Aorta (tissue), 5 donors: ENCODE measurements at regions of chr5 and their contacts with region 1.

Region 1: GRCh38 chr5:154356020-154356655 is 89.7 kb upstream of the SAP30L start:
- DNase-seq: no peak
- ATAC-seq: no peak
- H3K4me3 ChIP-seq: no peak overlapping the region
- H3K27ac ChIP-seq: no peak overlapping the region
- H3K4me1 ChIP-seq: peaks cover 2 to 11% of the 10 kb centered on the region in 2 donors
- H3K27me3 ChIP-seq: no peaks in the 10 kb centered on the region

Region 2: DNA sequence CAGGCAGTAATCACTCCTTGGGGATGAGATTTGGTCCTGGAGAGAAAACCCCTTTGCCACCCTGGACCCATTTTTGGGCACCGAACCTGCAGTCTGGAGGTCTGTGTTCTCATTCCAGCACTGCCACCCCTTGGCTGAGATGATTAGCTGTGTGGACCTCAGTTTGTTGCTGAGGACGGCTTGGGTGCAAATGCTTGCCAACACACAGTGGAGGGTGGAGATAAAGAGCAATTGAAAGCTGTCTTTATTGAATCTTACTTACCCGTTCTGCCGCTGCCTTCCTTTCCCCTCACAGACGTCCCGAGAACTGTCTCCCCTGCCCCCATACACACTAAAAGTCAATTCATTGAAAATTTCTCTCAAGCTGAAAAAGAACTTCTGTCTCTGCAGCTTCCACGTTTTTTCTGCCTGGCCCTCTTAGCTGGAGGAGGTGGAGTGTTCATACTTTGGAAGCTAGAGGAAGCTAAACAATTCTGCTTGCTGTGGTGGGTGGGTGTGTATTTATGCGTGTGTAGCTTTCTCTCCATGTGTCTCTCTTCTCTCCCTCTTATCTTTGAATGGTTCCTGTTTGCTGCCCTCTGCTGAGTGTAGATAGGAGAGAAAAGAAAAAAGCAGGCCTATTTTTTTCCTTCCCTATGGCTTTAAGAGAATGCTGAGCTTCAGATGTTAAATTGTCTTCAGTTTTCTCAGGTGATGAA is 159.0 kb before region 1 on chr5:
- intact Hi-C with region 1: loop called in 1 of 2 experiments (anchors 5 kb)
- DNase-seq: no peak
- ATAC-seq: peak; percentile 37
- H3K4me3 ChIP-seq: no peak overlapping the region
- H3K27ac ChIP-seq: no peak overlapping the region
- H3K4me1 ChIP-seq: peaks cover 0 to 3% of the 10 kb centered on the region in 2 donors
- H3K27me3 ChIP-seq: no peaks in the 10 kb centered on the region

Region 3: GRCh38 chr5:154287136-154287535 is 69.0 kb before region 1 on chr5:
- intact Hi-C with region 1: loop called in 1 of 2 experiments (anchors 5 kb)
- DNase-seq: peak in 1 of 2 donors; percentile 49
- ATAC-seq: peak; percentile 75
- H3K4me3 ChIP-seq: no peak overlapping the region
- H3K27ac ChIP-seq: peak overlapping the region in 1 of 2 donors; percentile 62
- H3K4me1 ChIP-seq: peaks cover 0 to 4% of the 10 kb centered on the region in 2 donors
- H3K27me3 ChIP-seq: no peaks in the 10 kb centered on the region

Region 4: DNA sequence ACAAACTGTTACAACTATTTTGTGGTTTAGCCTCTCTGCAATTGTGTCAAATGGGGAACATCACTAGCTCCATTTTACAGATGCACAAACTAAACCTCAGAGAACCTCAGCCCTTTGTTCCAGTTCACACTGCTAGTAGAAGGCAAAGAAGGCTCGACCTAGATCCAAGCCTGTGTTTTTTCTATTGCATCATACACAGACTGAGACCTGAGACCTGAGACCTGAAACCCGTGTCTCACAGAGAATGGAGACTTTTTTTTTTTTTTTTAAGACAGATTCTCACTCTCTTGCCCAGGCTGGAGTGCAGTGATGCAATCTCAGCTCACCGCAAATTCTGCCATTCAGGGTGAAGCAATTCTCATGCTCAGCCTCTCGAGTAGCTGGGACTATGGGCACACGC is 44.8 kb before region 1 on chr5:
- intact Hi-C with region 1: loop called in 1 of 2 experiments (anchors 5 kb)
- DNase-seq: no peak
- ATAC-seq: no peak
- H3K4me3 ChIP-seq: no peak overlapping the region
- H3K27ac ChIP-seq: no peak overlapping the region
- H3K4me1 ChIP-seq: no peaks in the 10 kb centered on the region
- H3K27me3 ChIP-seq: no peaks in the 10 kb centered on the region